Activated naive CD8-positive, alpha-beta T cell treated with anti-CD3 and anti-CD28 coated beads, Interleukin-2, amount 10 ng/mL, durations not matched to agents 7 days and 5 days (primary cell): ENCODE measurements at regions of chr7 and their contacts with region 1.

Region 1: GRCh38 chr7:35694781-35695472 is at the start of gene HERPUD2:
- DNase-seq: peak; percentile 93
- ATAC-seq: peak; percentile 81
- H3K4me3 Mint-ChIP-seq: peak within 1 kb of the TSS; percentile 95
- H3K27ac Mint-ChIP-seq: peak within 1 kb of the TSS; percentile 97
- H3K4me1 Mint-ChIP-seq: peaks cover 39% of the 10 kb centered on the region
- H3K27me3 Mint-ChIP-seq: no peaks in the 10 kb centered on the region
- total RNA-seq, gene HERPUD2: 48.5 to 55.6 TPM

Region 2: GRCh38 chr7:35714407-35714806 is 19.5 kb after region 1 on chr7:
- POLR2A ChIA-PET with region 1: interaction called, 15 read pairs
- DNase-seq: no peak
- ATAC-seq: no peak
- H3K4me3 Mint-ChIP-seq: no peak overlapping the region
- H3K27ac Mint-ChIP-seq: no peak overlapping the region
- H3K4me1 Mint-ChIP-seq: peaks cover 8% of the 10 kb centered on the region
- H3K27me3 Mint-ChIP-seq: peaks cover 6% of the 10 kb centered on the region

Region 3: DNA sequence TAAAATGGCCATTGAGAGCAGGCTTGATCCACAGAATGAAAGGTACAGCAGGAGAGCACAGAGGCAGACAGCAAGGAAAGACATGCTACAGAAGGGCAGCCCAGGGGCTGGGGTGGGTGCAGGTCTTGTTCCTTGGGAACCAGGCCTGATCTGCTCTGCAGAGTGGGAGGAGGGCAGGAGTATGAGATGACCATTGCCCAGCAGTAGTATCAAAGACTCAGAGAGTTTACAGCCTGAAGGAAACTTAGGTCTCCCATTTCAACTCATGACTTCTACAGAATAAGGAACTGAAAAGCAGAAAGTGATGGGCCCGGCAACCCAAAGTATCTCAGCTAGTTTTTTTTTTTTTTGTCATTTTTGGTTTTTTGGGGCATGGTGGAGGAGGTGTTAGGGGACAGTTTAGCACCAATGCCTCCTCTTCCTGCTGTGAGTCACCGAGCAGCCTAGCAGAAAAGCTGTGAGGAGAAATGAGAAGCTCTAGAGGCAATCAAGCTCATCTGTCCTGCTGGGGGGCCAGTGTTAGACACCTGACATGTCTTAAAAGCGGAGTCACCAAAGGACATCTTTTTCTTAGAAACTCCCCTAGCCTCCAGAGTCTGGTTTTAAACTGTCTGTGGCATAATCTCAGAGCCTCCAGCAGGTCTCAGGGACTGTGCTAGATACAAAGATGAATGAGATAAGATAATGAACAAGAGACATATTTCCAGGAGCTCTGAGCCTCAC is 34.3 kb after region 1 on chr7:
- POLR2A ChIA-PET with region 1: interaction called, 21 read pairs
- DNase-seq: no peak
- ATAC-seq: peak; percentile 62
- H3K4me3 Mint-ChIP-seq: peak overlapping the region; percentile 26
- H3K27ac Mint-ChIP-seq: peak overlapping the region; percentile 70
- H3K4me1 Mint-ChIP-seq: peaks cover 49% of the 10 kb centered on the region
- H3K27me3 Mint-ChIP-seq: peaks cover 4% of the 10 kb centered on the region